Left cardiac atrium (tissue), 4 donors: ENCODE measurements at regions of chr1 and their contacts with region 1.

Region 1: DNA sequence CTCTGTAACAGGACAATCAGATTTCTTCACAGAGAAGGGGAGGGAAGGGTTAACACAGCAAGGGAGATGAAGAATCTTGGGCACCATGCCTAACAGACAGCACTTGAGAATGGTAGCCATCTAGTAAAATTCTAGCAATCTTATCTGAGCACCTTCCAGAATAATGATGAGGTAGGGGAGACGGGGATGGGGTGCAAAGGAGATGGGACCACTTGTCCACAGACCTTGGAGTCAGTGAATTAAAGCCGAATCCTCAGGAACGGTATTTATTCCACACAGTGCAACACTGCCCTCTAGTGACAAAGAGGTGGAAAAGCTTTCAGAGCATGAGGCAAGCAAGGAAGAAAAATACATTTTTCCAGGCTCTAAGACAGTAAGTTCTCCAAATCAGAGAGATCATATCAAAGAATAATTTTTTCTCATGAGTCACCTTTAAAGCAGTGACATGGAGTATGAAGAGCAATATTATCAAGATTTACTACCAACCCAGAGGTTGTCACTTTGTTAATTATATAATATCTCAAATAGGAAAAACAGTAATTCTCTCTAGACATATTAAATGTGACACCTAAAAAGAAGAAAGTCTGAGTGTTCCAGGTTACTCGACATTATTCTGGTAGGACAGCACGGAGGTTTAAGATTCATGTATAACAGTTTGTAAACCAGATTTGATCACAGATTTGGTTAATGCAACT is 43.3 kb upstream of the LPAR3 start:
- DNase-seq: no peak
- ATAC-seq: peak; percentile 80 to 85

Region 2: GRCh38 chr1:84758968-84759491 is 177.2 kb before region 1 on chr1:
- intact Hi-C with region 1: loop called in 1 of 2 experiments (anchors 5 kb)
- DNase-seq: peak; percentile 40
- ATAC-seq: peak; percentile 78 to 92

Region 3: GRCh38 chr1:84772428-84772943 is 163.8 kb before region 1 on chr1:
- intact Hi-C with region 1: loop called in 1 of 2 experiments (anchors 5 kb)
- DNase-seq: peak; percentile 85
- ATAC-seq: peak; percentile 87 to 89